ENCODE measurements at regions of chr3 and their contacts with region 1.

Region 1: DNA sequence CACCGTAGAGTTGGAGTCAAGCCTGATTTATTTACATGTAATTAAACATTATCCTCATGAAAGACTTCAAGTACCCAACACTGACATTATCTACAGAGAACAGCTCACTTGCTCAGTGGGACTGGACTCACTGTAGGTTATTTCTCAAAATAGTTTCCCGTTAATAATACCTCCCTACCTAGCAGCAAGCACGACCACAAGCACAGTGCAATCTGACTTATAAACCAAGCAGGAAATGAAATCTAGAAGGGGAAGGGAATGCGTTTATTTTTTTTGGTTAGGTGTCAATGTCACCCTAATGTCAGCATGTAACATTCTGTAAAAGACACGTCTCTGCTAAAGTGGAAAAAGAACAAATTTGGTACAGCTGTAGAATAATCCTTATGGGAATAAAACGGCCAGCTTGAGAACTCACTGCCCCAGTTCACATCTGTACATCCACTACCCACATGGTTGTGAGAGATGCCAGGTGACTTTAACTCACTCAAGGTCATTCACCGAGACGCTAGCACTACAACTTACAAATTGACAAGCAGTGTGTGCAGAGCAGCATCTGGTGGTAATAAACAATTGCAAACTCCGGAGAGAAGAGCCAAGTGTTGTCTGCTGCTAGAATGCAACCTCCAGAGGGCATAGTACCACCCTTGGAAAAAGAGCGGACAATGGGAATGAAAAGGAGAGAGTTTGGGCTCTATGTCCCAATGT is 242.6 kb downstream of the CADPS start:
- DNase-seq: no peak
- ATAC-seq: peak in 3 of 8 donors; percentile 22 to 44 (median 39)
- H3K4me3 ChIP-seq: no peak overlapping the region
- H3K27ac ChIP-seq: no peak overlapping the region
- H3K4me1 ChIP-seq: peaks cover 0 to 6% (median 0%) of the 10 kb centered on the region in 9 donors
- H3K27me3 ChIP-seq: peaks cover 0 to 6% (median 0%) of the 10 kb centered on the region in 7 donors
- CTCF ChIP-seq: peak in 3 of 9 donors; percentile 8 to 20 (median 8)

Region 2: GRCh38 chr3:63193629-63194028 is 561.0 kb after region 1 on chr3:
- intact Hi-C with region 1: loop called in 1 of 10 experiments (anchors 10 kb)
- DNase-seq: no peak
- ATAC-seq: peak in 2 of 8 donors; percentile 37 to 49
- H3K4me3 ChIP-seq: no peak overlapping the region
- H3K27ac ChIP-seq: no peak overlapping the region
- H3K4me1 ChIP-seq: no peaks in the 10 kb centered on the region
- H3K27me3 ChIP-seq: no peaks in the 10 kb centered on the region
- CTCF ChIP-seq: peak; percentile 4 to 63 (median 41)